AG04450 (cell line): ENCODE measurements at regions of chr11 and their contacts with region 1.

Region 1: DNA sequence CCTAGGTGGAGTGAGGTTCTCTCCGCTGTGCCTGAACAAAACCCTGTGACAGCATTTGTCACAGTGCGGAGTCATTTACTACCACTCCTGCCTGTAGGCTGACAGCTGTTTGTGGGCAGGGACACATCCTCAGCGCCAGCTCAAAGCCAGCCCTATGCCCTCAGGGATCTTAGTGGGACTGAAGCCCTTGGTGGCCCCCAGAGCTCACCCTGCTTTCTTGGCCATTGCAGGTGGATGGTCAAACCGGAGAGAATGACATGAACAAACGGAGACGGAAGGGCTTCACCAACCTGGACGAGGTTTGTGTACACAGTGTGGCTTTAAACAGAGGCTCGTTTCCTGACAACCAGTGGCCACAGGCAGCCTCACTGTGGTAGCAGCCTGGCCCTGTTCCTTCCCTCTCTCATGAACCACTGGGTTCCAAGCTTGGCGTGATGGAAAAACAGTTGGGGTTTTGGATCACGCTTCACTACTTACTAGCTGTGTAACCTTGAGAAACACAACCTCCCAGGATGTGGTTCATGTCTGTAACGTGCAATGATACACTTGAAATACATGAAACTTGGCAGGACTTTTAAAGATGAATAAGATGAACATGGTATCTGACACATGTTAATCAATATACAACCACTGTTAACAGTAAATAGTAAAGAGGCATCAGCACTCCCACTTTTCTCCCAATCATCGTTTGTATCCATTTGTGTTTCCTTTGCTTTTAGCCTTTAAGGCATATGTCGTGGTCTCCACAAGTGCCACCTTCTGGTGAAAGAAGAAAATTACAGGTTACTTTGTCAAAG is 125.8 kb downstream of the MICAL2 start:
- DNase-seq: peak; percentile 43
- H3K4me3 ChIP-seq: no peak overlapping the region
- H3K27ac ChIP-seq: peak overlapping the region; percentile 65
- H3K27me3 ChIP-seq: no peaks in the 10 kb centered on the region
- CTCF ChIP-seq: peak; percentile 70

Region 2: GRCh38 chr11:12052676-12053605 is 183.2 kb before region 1 on chr11:
- CTCF ChIA-PET with region 1: interaction called, 32 read pairs
- POLR2A ChIA-PET with region 1: no interaction called
- DNase-seq: no peak
- H3K4me3 ChIP-seq: no peak overlapping the region
- H3K27ac ChIP-seq: no peak overlapping the region
- H3K27me3 ChIP-seq: no peaks in the 10 kb centered on the region
- CTCF ChIP-seq: peak; percentile 45

Region 3: DNA sequence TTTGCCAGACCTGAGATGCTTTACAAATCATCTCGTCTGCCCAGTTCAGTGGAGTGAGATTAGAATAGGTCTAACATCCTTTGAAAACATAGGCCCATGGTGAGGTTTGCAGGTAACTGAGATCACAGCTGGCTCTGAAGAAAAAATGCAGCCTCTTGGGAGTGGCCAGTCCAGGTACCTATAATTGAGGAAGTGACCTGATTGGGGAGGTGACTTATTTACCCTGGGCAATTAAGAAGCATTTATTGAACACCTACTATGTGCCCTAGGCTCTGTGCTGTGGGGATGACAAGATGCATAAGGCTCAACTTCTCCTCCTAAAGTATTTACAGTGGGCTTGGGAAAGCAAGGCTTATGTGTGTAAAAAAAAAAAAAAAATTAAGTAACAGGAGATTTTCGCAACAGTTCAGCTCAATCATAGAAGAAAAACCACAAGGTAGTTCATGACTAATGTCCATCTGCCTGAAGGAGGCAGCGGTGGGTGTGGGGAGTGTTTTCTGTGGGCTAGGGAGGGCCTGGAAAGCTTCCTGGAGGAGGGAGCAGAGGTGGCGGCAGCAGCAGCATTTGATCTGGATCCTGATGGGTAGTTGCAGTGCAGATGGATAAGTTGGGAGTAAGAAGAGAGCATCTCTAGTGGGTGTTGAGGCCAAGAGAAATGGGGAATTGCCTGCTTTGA is 109.7 kb before region 1 on chr11:
- CTCF ChIA-PET with region 1: interaction called, 11 read pairs
- POLR2A ChIA-PET with region 1: no interaction called
- DNase-seq: no peak
- H3K4me3 ChIP-seq: no peak overlapping the region
- H3K27ac ChIP-seq: peak overlapping the region; percentile 88
- H3K27me3 ChIP-seq: no peaks in the 10 kb centered on the region
- CTCF ChIP-seq: no peak

Region 4: GRCh38 chr11:12224537-12224893 is 11.6 kb before region 1 on chr11:
- CTCF ChIA-PET with region 1: interaction called, 24 read pairs
- POLR2A ChIA-PET with region 1: interaction called, 4 read pairs
- DNase-seq: peak; percentile 88
- H3K4me3 ChIP-seq: no peak overlapping the region
- H3K27ac ChIP-seq: peak overlapping the region; percentile 94
- H3K27me3 ChIP-seq: no peaks in the 10 kb centered on the region
- CTCF ChIP-seq: no peak